PC-3 (cell line): ENCODE measurements at regions of chr1 and their contacts with region 1.

Region 1: DNA sequence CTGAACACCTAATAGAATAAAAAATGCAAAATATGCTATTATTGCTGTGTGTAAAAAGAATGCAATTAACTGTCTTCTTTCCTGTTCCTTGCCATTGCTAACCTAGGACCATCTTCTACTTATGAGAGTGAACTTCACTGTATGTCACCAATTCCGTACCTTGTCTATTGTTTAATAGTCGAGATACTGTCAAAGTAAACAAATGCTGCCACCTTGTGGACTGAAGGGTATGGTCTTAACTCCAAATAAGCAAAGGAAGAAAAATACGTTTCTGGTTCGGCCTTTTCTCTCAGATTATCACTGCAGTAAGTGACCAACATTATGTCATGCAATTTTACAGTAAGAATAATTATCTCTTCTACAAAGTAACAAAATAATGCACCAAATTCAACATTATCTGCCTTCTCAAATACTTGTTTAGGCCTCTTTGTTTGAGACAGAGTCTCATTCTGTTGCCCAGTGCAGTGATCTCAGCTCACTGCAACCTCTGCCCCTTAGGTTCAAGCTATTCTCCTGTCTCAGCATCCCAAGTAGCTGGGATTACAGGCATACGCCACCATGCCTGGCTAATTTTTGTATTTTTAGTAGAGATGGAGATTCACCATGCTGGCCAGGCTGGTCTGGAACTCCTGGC is 133.4 kb downstream of the COP1 start:
- DNase-seq: peak; percentile 71
- ATAC-seq: peak; percentile 83
- H3K4me3 ChIP-seq: no peak overlapping the region
- H3K27ac ChIP-seq: no peak overlapping the region
- H3K4me1 ChIP-seq: no peaks in the 10 kb centered on the region
- H3K27me3 ChIP-seq: no peaks in the 10 kb centered on the region
- CTCF ChIP-seq: peak; percentile 73

Region 2: DNA sequence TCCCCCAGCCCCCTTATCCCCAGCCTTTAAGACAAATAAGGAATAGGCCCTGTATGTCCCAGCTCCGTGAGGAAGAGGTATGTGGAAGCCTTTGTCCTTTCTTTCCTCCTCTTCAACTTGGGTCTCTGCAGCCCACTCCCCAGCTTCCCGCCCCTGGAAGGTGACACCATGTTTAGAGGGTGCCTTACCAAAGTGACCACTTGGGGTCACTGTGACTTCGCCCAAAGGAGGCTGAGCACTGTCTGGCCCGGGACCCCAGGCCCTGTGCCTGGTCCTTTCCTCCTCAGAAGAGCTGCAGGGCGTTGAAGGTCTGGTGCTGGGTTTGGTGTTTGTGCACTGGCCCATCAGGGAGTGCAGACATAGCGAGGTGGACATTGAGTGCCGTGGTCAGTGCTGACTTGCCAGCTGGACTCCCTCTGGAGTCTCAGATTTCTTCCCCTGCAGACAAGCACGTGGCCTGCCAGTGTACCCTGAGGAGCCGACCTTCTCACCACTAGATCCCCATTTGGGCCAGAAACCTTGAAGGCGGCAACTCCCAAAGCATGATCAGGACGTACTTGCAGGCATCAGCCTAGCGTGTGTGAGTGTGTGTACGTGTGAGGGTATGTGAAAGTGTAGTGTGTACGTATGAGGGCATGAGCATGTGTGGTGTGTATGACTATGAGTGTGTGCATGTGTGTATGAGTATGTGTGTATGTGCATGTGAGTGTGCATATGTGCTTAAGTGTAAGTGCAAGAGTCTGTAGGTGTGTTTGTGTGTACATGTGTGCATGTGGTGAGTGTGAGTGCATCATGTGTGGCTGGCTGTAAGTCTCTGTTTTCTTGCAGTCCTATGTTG is 699.6 kb before region 1 on chr1:
- CTCF ChIA-PET with region 1: no interaction called
- POLR2A ChIA-PET with region 1: no interaction called
- intact Hi-C with region 1: loop called (anchors 10 kb)
- DNase-seq: peak; percentile 40
- ATAC-seq: peak; percentile 61
- H3K4me3 ChIP-seq: no peak overlapping the region
- H3K27ac ChIP-seq: no peak overlapping the region
- H3K4me1 ChIP-seq: no peaks in the 10 kb centered on the region
- H3K27me3 ChIP-seq: peaks cover 18% of the 10 kb centered on the region; the same call in 1 of the 2 replicates
- CTCF ChIP-seq: peak; percentile 72

Region 3: GRCh38 chr1:175471039-175471800 is 602.4 kb before region 1 on chr1:
- CTCF ChIA-PET with region 1: no interaction called
- POLR2A ChIA-PET with region 1: no interaction called
- intact Hi-C with region 1: no loop called
- DNase-seq: peak; percentile 34
- ATAC-seq: peak; percentile 38
- H3K4me3 ChIP-seq: no peak overlapping the region
- H3K27ac ChIP-seq: peak overlapping the region; percentile 19; the same call in 1 of the 2 replicates
- H3K4me1 ChIP-seq: 0 out of 2 replicates have a peak, but pooled peaks cover 3% of the 10 kb centered on the region
- H3K27me3 ChIP-seq: 0 out of 2 replicates have a peak, but pooled peaks cover 4% of the 10 kb centered on the region
- CTCF ChIP-seq: no peak

Region 4: DNA sequence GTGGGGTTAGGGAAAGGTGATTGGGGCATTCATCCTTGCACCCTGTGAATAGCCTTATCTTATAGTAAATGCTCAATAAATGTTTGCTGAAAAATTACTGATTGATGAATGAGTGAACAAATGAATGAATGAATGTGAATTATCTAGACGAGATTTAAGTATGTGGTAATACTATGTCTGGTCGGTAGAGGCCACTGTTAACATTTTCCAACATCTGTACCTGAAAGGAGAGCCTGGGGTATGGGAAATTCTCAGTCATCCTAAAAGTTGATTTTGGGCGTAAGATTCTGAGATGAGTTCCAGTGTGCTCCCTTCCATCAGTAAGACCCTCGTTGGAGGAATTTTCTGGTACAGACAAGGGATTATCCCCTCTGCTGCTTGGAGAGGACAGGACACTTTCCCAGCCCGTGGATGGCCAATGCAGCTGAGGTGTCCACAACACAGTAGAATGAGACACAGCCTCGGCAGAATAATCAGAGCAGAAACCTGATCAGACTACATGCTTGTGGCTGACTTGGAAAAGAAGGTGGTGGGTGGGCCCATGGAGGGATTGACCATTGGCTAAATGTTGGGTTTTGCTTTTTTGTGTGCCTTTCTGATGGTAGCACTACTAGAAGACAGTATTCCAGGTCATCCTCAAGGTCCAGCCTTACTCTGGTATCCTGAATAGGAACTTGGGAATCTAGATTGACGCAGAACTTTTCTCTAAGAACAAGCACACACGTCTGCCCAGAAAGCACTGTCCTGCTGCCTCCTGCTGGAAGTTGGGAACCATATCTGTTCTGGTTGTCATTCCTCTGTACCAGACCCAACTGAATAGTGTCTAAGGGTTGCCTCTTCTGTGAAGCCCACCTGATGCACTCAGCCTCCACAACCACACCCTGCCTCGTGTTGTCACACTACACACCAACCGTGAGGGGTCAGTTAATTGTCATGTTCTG is 592.2 kb before region 1 on chr1:
- CTCF ChIA-PET with region 1: no interaction called
- POLR2A ChIA-PET with region 1: no interaction called
- intact Hi-C with region 1: loop called (anchors 5 kb)
- DNase-seq: peak; percentile 38
- ATAC-seq: no peak
- H3K4me3 ChIP-seq: no peak overlapping the region
- H3K27ac ChIP-seq: no peak overlapping the region
- H3K4me1 ChIP-seq: no peaks in the 10 kb centered on the region
- H3K27me3 ChIP-seq: no peaks in the 10 kb centered on the region
- CTCF ChIP-seq: peak; percentile 54

Region 5: GRCh38 chr1:175922254-175922881 is 151.3 kb before region 1 on chr1:
- CTCF ChIA-PET with region 1: no interaction called
- POLR2A ChIA-PET with region 1: no interaction called
- intact Hi-C with region 1: loop called (anchors 10 kb)
- DNase-seq: no peak
- ATAC-seq: no peak
- H3K4me3 ChIP-seq: no peak overlapping the region
- H3K27ac ChIP-seq: no peak overlapping the region
- H3K4me1 ChIP-seq: no peaks in the 10 kb centered on the region
- H3K27me3 ChIP-seq: no peaks in the 10 kb centered on the region
- CTCF ChIP-seq: no peak

Region 6: GRCh38 chr1:176101924-176102642 is 28.4 kb after region 1 on chr1:
- CTCF ChIA-PET with region 1: no interaction called
- POLR2A ChIA-PET with region 1: no interaction called
- intact Hi-C with region 1: no loop called
- DNase-seq: no peak
- ATAC-seq: no peak
- H3K4me3 ChIP-seq: no peak overlapping the region
- H3K27ac ChIP-seq: no peak overlapping the region
- H3K4me1 ChIP-seq: no peaks in the 10 kb centered on the region
- H3K27me3 ChIP-seq: no peaks in the 10 kb centered on the region
- CTCF ChIP-seq: no peak

Region 7: DNA sequence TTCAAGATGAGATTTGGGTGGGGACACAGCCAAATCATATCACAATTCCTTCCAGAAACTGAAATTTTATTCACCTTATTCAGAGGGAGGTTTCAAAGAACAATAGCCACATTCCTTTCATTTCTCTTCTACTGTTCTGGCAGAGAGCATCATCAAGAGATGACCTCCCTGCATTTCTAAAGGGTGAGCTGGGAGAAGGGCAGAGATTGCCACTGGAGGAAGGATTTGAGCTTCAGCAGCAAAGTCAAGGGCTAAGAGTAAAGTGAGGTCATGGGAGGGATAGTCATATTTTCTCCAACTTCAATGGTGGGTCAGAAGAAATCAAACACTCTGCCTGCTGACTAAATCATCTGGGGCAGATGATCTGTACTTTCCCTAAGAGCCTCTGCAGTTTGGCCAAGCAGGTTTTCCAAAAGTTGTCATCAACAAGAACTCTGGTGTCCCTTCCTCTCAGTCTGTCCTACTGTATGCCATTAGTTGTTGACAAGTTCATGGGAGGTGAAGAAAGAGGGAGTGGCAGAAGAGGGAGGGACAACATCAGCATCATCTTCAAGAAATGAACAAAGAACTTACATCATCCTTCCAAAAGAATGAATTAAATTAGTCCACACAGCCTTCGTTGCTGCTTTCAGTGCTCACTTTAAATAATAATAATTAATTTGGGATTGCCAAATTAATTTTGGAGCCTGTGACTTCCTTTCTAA is 792.5 kb after region 1 on chr1:
- CTCF ChIA-PET with region 1: no interaction called
- POLR2A ChIA-PET with region 1: no interaction called
- intact Hi-C with region 1: no loop called
- DNase-seq: no peak
- ATAC-seq: no peak
- H3K4me3 ChIP-seq: no peak overlapping the region
- H3K27ac ChIP-seq: no peak overlapping the region
- H3K4me1 ChIP-seq: no peaks in the 10 kb centered on the region
- H3K27me3 ChIP-seq: peaks cover 9% of the 10 kb centered on the region
- CTCF ChIP-seq: no peak